CD8-positive, alpha-beta T cell (primary cell): ENCODE measurements at regions of chr3 and their contacts with region 1.

Region 1: GRCh38 chr3:30693470-30694120 is 87.2 kb downstream of the TGFBR2 start:
- DNase-seq: peak in 6 of 9 experiments; percentile 42 to 85 (median 61)
- ATAC-seq: peak; percentile 89
- H3K4me3 ChIP-seq: no peak overlapping the region
- H3K4me3 Mint-ChIP-seq: no peak overlapping the region
- H3K27ac ChIP-seq: peak overlapping the region in 1 of 2 experiments; percentile 4
- H3K27ac Mint-ChIP-seq: peak overlapping the region; percentile 72
- H3K4me1 ChIP-seq: peaks cover 57% of the 10 kb centered on the region
- H3K4me1 Mint-ChIP-seq: peaks cover 88% of the 10 kb centered on the region
- H3K27me3 ChIP-seq: no peaks in the 10 kb centered on the region
- H3K27me3 Mint-ChIP-seq: no peaks in the 10 kb centered on the region
- CTCF ChIP-seq: peak; percentile 87

Region 2: GRCh38 chr3:30112902-30113484 is 580.6 kb before region 1 on chr3:
- CTCF ChIA-PET with region 1: interaction called, 13 read pairs
- POLR2A ChIA-PET with region 1: interaction called, 3 read pairs
- intact Hi-C with region 1: loop called (anchors 1 kb)
- DNase-seq: peak in 2 of 9 experiments; percentile 43 to 61
- ATAC-seq: no peak
- H3K4me3 ChIP-seq: no peak overlapping the region
- H3K4me3 Mint-ChIP-seq: no peak overlapping the region
- H3K27ac ChIP-seq: no peak overlapping the region
- H3K27ac Mint-ChIP-seq: no peak overlapping the region
- H3K4me1 ChIP-seq: no peaks in the 10 kb centered on the region
- H3K4me1 Mint-ChIP-seq: peaks cover 6% of the 10 kb centered on the region
- H3K27me3 ChIP-seq: no peaks in the 10 kb centered on the region
- H3K27me3 Mint-ChIP-seq: no peaks in the 10 kb centered on the region
- CTCF ChIP-seq: peak; percentile 78

Region 3: DNA sequence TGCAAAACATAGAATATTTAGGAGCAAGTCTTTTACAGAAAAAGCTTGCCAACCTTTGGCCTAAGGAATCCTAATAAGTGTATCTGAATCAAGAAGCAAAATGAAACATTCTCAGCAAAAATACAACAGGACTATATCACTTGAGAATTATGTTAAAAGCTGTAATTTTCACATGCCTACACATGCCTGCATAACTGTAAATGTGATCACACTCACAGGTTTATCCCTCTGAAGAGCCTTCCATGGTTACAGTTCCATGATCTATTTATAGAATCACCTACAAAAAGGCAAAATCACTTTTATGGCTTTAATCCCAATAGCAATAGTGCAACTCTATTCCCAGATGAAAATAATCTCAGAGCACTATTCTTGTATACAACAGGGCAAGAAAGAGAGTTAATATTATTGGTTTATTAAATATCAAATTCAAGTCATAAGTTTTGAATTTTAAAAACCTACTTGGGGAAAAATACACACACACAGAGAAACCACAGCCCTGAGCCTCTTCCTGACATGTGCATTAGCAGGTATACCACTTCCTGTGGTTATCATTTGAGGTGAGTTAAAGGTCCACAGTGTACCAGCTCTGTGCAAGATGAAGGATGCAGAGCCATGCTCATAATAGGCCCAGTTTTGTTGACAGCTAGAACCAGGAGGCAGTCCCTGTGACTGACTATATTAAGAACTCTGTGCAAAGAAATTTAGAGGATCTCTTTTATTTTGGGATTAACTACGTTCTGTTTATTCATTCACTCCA is 339.7 kb before region 1 on chr3:
- CTCF ChIA-PET with region 1: no interaction called
- POLR2A ChIA-PET with region 1: no interaction called
- intact Hi-C with region 1: loop called in 1 of 2 experiments (anchors 1 kb)
- DNase-seq: peak; percentile 3 to 91 (median 53)
- ATAC-seq: peak; percentile 98
- H3K4me3 ChIP-seq: peak overlapping the region in 1 of 2 experiments; percentile 2
- H3K4me3 Mint-ChIP-seq: peak overlapping the region; percentile 64
- H3K27ac ChIP-seq: peak overlapping the region in 1 of 2 experiments; percentile 25
- H3K27ac Mint-ChIP-seq: peak overlapping the region; percentile 94
- H3K4me1 ChIP-seq: peaks cover 82% of the 10 kb centered on the region
- H3K4me1 Mint-ChIP-seq: peaks cover 85% of the 10 kb centered on the region
- H3K27me3 ChIP-seq: no peaks in the 10 kb centered on the region
- H3K27me3 Mint-ChIP-seq: no peaks in the 10 kb centered on the region
- CTCF ChIP-seq: no peak

Region 4: GRCh38 chr3:30611613-30612436 is 81.8 kb before region 1 on chr3:
- CTCF ChIA-PET with region 1: interaction called, 17 read pairs
- POLR2A ChIA-PET with region 1: interaction called, 6 read pairs
- intact Hi-C with region 1: loop called (anchors 2 to 5 kb)
- DNase-seq: peak in 2 of 9 experiments; percentile 53 to 69
- ATAC-seq: peak; percentile 29
- H3K4me3 ChIP-seq: peak overlapping the region; percentile 89 to 94
- H3K4me3 Mint-ChIP-seq: peak overlapping the region; percentile 94
- H3K27ac ChIP-seq: peak overlapping the region; percentile 63 to 74
- H3K27ac Mint-ChIP-seq: peak overlapping the region; percentile 98
- H3K4me1 ChIP-seq: peaks cover 54% of the 10 kb centered on the region
- H3K4me1 Mint-ChIP-seq: peaks cover 68% of the 10 kb centered on the region
- H3K27me3 ChIP-seq: no peaks in the 10 kb centered on the region
- H3K27me3 Mint-ChIP-seq: no peaks in the 10 kb centered on the region
- CTCF ChIP-seq: no peak

Region 5: GRCh38 chr3:30672959-30673358 is 20.6 kb before region 1 on chr3:
- CTCF ChIA-PET with region 1: interaction called, 23 read pairs
- POLR2A ChIA-PET with region 1: interaction called, 3 read pairs
- intact Hi-C with region 1: no loop called
- DNase-seq: no peak
- ATAC-seq: no peak
- H3K4me3 ChIP-seq: no peak overlapping the region
- H3K4me3 Mint-ChIP-seq: peak overlapping the region; percentile 15
- H3K27ac ChIP-seq: peak overlapping the region; percentile 2 to 7
- H3K27ac Mint-ChIP-seq: peak overlapping the region; percentile 72
- H3K4me1 ChIP-seq: peaks cover 93% of the 10 kb centered on the region
- H3K4me1 Mint-ChIP-seq: peaks cover 98% of the 10 kb centered on the region
- H3K27me3 ChIP-seq: no peaks in the 10 kb centered on the region
- H3K27me3 Mint-ChIP-seq: no peaks in the 10 kb centered on the region
- CTCF ChIP-seq: no peak

Region 6: GRCh38 chr3:30751610-30752299 is 58.2 kb after region 1 on chr3:
- CTCF ChIA-PET with region 1: interaction called, 38 read pairs
- POLR2A ChIA-PET with region 1: no interaction called
- intact Hi-C with region 1: no loop called
- DNase-seq: peak; percentile 25 to 76 (median 61)
- ATAC-seq: peak; percentile 73
- H3K4me3 ChIP-seq: no peak overlapping the region
- H3K4me3 Mint-ChIP-seq: no peak overlapping the region
- H3K27ac ChIP-seq: no peak overlapping the region
- H3K27ac Mint-ChIP-seq: no peak overlapping the region
- H3K4me1 ChIP-seq: no peaks in the 10 kb centered on the region
- H3K4me1 Mint-ChIP-seq: peaks cover 10% of the 10 kb centered on the region
- H3K27me3 ChIP-seq: no peaks in the 10 kb centered on the region
- H3K27me3 Mint-ChIP-seq: no peaks in the 10 kb centered on the region
- CTCF ChIP-seq: peak; percentile 55